Activated T-helper 1 cell treated with anti-CD3 and anti-CD28 coated beads, Interleukin-12 subunit alpha, Interleukin-12 subunit beta, Interleukin-2, Interleukin-4 antibody, amounts not matched to agents 30 ng/mL and 10 ng/mL and 1 ng/mL, durations not matched to agents 14 hours and 24 hours and 36 hours (primary cell): ENCODE measurements at regions of chr7 and their contacts with region 1.

Region 1: GRCh38 chr7:138875794-138876193 is 77.8 kb upstream of the ATP6V0A4 start:
- DNase-seq: peak; percentile 74
- H3K4me3 Mint-ChIP-seq: no peak overlapping the region
- H3K27ac Mint-ChIP-seq: peak overlapping the region; percentile 74
- H3K4me1 Mint-ChIP-seq: peaks cover 24% of the 10 kb centered on the region
- H3K27me3 Mint-ChIP-seq: no peaks in the 10 kb centered on the region

Region 2: GRCh38 chr7:138746073-138746472 is 129.7 kb before region 1 on chr7:
- intact Hi-C with region 1: loop called (anchors 2 kb)
- DNase-seq: no peak
- H3K4me3 Mint-ChIP-seq: no peak overlapping the region
- H3K27ac Mint-ChIP-seq: peak overlapping the region; percentile 5
- H3K4me1 Mint-ChIP-seq: peaks cover 40% of the 10 kb centered on the region
- H3K27me3 Mint-ChIP-seq: peaks cover 1% of the 10 kb centered on the region

Region 3: DNA sequence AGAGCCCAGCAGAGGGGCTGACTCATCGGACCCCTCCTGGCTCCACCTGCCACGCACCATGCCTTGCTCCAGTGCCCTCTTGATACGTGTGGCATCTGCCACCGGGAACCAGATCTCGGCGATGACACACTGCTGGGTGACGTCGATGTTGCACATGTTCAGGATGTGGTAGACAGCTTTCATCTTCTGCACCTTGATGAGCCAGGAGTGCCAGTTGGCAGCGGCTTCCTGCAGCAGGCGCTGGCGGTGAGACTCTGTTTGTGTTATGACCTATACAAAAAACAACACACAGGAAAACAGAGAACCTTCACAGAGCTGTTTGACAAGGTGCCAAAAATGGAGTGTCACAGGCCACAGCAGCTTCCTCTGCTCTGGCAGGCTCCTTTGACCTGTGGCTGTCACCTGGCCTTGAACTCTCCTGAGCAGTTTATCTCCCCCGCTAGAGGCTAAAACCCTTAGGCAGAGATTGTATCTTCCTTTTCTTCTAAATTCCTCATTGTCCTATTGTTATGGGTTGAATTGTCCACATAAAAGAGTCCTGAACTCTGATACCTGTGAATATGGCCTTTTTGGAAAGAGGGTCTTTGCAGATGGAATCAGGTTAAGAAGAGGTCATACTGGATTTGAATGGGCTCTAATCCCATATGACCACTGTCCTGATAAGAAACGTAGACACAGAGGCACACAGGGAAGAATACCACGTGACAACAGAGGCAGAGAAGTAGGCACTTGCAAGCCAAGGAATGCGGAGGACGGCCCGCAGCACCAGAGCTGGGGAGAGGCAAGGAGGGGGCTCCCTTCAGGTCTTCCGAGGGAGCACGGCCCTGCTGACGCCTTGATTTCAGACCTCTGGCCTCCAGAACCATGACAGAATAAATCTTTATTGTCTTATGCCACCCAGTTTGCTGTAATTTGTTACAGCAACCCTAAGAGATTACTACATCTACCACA is 123.0 kb before region 1 on chr7:
- intact Hi-C with region 1: loop called (anchors 1 kb)
- DNase-seq: peak; percentile 86
- H3K4me3 Mint-ChIP-seq: peak overlapping the region; percentile 27
- H3K27ac Mint-ChIP-seq: peak overlapping the region; percentile 80
- H3K4me1 Mint-ChIP-seq: peaks cover 72% of the 10 kb centered on the region
- H3K27me3 Mint-ChIP-seq: peaks cover 1% of the 10 kb centered on the region

Region 4: DNA sequence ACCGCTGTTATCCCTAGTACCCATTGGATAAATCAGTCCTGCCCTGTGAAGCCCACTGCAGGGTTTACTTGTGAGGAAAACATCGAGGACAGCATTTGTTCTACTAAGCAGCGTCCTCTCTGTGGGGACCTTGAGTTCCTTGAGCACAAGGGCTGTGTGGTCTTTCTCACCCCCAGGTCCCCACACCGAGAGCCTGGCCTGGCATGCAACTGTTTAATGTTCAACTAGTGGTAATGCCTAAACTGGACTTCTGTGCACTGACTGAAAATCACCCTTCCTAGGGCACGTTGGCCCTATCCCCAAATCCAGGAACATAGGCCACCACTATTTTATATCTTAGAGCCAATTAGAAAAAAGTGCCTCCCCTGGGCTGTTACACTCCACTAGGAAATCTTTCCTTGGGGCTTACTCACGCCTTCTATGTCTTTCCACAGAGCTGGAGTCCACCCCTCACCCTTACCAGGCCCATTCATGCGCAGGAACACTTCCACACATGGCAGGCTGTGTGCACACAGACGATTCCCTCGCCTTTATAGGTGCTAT is 79.7 kb before region 1 on chr7:
- intact Hi-C with region 1: no loop called
- DNase-seq: no peak
- H3K4me3 Mint-ChIP-seq: no peak overlapping the region
- H3K27ac Mint-ChIP-seq: no peak overlapping the region
- H3K4me1 Mint-ChIP-seq: peaks cover 27% of the 10 kb centered on the region
- H3K27me3 Mint-ChIP-seq: peaks cover 1% of the 10 kb centered on the region

Region 5: GRCh38 chr7:138903186-138903820 is 27.5 kb after region 1 on chr7:
- intact Hi-C with region 1: loop called (anchors 1 kb)
- DNase-seq: peak; percentile 78
- H3K4me3 Mint-ChIP-seq: peak overlapping the region; percentile 74
- H3K27ac Mint-ChIP-seq: peak overlapping the region; percentile 84
- H3K4me1 Mint-ChIP-seq: peaks cover 49% of the 10 kb centered on the region
- H3K27me3 Mint-ChIP-seq: peaks cover 48% of the 10 kb centered on the region